B cell (primary cell): ENCODE measurements at regions of chr16 and their contacts with region 1.

Region 1: GRCh38 chr16:31243734-31244670 is 15.8 kb upstream of the ITGAM start:
- DNase-seq: peak; percentile 82
- ATAC-seq: peak; percentile 90
- H3K4me3 ChIP-seq: no peak overlapping the region
- H3K4me3 Mint-ChIP-seq: peak overlapping the region; percentile 52
- H3K27ac ChIP-seq: no peak overlapping the region
- H3K27ac Mint-ChIP-seq: peak overlapping the region; percentile 57
- H3K4me1 ChIP-seq: peaks cover 11 to 19% of the 10 kb centered on the region in 2 donors
- H3K4me1 Mint-ChIP-seq: peaks cover 13% of the 10 kb centered on the region
- H3K27me3 ChIP-seq: peaks cover 0 to 12% (median 4%) of the 10 kb centered on the region in 4 experiments
- H3K27me3 Mint-ChIP-seq: no peaks in the 10 kb centered on the region
- CTCF ChIP-seq: no peak

Region 2: GRCh38 chr16:31265329-31266245 is 21.6 kb after region 1 on chr16:
- CTCF ChIA-PET with region 1: interaction called, 5 read pairs
- POLR2A ChIA-PET with region 1: no interaction called
- intact Hi-C with region 1: loop called (anchors 1 kb)
- DNase-seq: peak; percentile 79
- ATAC-seq: peak; percentile 90
- H3K4me3 ChIP-seq: no peak overlapping the region
- H3K4me3 Mint-ChIP-seq: peak overlapping the region; percentile 72
- H3K27ac ChIP-seq: no peak overlapping the region
- H3K27ac Mint-ChIP-seq: peak overlapping the region; percentile 80
- H3K4me1 ChIP-seq: peaks cover 38 to 56% of the 10 kb centered on the region in 2 donors
- H3K4me1 Mint-ChIP-seq: peaks cover 47% of the 10 kb centered on the region
- H3K27me3 ChIP-seq: peaks cover 0 to 6% (median 0%) of the 10 kb centered on the region in 4 experiments
- H3K27me3 Mint-ChIP-seq: no peaks in the 10 kb centered on the region
- CTCF ChIP-seq: no peak